ENCODE measurements at regions of chrX and their contacts with region 1.

Region 1: DNA sequence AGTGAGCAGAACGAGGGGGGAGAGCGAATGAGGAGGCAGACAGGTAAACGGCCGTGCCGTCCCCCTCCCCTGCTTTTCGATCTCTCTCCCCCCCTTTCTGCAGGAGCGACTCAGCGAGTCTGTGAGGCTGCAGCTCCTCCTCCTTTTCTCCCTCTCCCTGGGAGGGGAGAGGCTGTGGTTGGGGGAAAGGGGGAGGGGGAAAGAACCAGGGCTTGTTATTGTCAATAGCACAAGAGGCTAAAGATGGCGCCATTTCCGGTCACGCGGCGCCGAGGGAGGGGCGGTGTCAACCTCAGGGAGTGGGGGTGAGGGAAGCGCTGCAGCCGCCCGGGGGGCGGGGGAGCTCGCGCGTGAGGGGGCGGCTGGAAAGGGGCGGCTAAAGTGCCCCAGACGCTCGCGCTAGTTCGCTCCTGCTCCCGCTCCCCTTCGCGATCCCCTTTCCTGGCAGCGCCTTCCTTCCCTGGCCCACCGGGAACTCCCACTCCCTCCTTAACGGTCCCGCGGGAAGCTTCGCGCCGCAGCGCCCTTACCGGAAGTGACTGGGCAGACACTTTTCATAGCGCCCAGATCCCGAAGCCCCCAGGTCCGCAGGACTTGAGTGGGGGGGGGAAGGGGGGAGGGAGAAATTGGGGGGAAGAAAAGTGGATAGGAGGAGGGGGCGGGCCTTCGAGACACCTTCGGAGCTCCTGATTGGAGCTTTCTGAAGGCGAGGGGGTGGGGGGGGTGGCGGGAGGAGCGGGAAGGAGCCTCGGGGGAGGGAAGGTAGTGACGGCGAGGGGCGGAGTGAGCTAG is at the start of gene CUL4B:
- DNase-seq: peak; percentile 91 to 93
- ATAC-seq: peak; percentile 90 to 98 (median 96)
- H3K4me3 ChIP-seq: peak within 1 kb of the TSS; percentile 41 to 75 (median 66)
- H3K27ac ChIP-seq: peak within 1 kb of the TSS; percentile 94 to 99 (median 98)
- H3K4me1 ChIP-seq: peaks cover 0 to 37% (median 13%) of the 10 kb centered on the region in 9 donors
- H3K27me3 ChIP-seq: no peaks in the 10 kb centered on the region
- CTCF ChIP-seq: no peak
- total RNA-seq, gene CUL4B: 17.1 to 24.1 (median 19.9) TPM

Region 2: GRCh38 chrX:120603707-120604360 is 42.8 kb after region 1 on chrX and contains the start of gene MCTS1:
- intact Hi-C with region 1: loop called in 5 of 10 experiments (anchors 2 to 5 kb)
- DNase-seq: peak; percentile 70 to 84
- ATAC-seq: peak; percentile 92 to 97 (median 96)
- H3K4me3 ChIP-seq: peak within 1 kb of the TSS; percentile 56 to 82 (median 66)
- H3K27ac ChIP-seq: peak within 1 kb of the TSS; percentile 73 to 94 (median 90)
- H3K4me1 ChIP-seq: peaks cover 0 to 24% (median 6%) of the 10 kb centered on the region in 9 donors
- H3K27me3 ChIP-seq: no peaks in the 10 kb centered on the region
- CTCF ChIP-seq: no peak
- total RNA-seq, gene MCTS1: 31.4 to 41.0 (median 35.6) TPM

Region 3: DNA sequence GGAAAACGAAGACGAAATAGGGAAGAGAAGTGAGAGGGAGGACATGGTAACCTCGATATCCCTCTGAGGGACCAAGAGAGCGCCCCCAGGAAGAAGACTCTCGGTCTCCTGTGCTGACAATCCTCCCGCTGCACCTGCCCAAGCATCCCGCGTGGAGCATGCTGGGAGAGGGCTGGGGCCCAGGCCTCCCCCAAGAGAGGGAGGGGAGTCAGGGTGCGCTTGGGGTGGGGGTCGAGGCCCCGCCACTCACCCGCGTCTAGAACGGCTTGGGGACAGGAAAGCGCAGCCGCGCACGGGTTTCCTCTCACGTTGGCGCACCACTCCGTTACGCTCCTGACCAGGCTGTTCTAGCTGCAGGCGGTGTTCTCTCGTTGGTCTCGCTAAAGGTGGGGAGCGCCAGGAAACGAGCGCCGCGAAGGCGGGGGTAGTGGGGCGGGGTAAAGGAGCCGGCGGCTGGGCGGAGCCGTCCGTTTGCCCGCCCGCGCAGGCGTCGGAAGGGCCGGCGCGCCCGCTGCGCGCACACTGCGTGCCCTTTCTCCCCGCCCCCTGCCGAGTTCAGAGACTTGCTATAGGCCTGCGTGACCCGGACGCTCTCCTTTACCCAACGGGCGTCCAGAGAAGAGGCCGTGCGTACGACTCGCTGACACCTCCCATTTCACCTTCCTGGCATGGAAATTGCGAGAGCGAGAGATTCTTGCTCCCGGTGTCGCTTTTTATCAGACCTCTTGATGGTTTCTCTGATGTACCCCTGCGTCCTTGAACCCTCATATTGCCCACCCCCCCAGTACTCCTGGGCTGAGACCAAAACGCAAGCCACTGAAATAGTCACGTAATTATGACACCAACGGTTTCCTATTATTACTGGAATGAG is 68.9 kb after region 1 on chrX and contains the start of gene C1GALT1C1:
- intact Hi-C with region 1: loop called in 2 of 10 experiments (anchors 1 kb)
- DNase-seq: peak; percentile 91 to 92
- ATAC-seq: peak; percentile 99 to 100 (median 99)
- H3K4me3 ChIP-seq: peak within 1 kb of the TSS; percentile 47 to 85 (median 75)
- H3K27ac ChIP-seq: peak within 1 kb of the TSS; percentile 67 to 94 (median 88)
- H3K4me1 ChIP-seq: peaks cover 0 to 26% (median 5%) of the 10 kb centered on the region in 9 donors
- H3K27me3 ChIP-seq: no peaks in the 10 kb centered on the region
- CTCF ChIP-seq: no peak
- total RNA-seq, gene C1GALT1C1: 13.6 to 22.7 (median 17.2) TPM

Region 4: GRCh38 chrX:120672390-120672789 is 111.4 kb after region 1 on chrX:
- intact Hi-C with region 1: loop called in 1 of 10 experiments (anchors 2 kb)
- DNase-seq: peak; percentile 22 to 36
- ATAC-seq: peak in 7 of 8 donors; percentile 69 to 98 (median 92)
- H3K4me3 ChIP-seq: no peak overlapping the region
- H3K27ac ChIP-seq: peak overlapping the region; percentile 17 to 73 (median 53)
- H3K4me1 ChIP-seq: peaks cover 0 to 18% (median 5%) of the 10 kb centered on the region in 9 donors
- H3K27me3 ChIP-seq: no peaks in the 10 kb centered on the region
- CTCF ChIP-seq: no peak

Measured in heart right ventricle (tissue), 16 donors.